ENCODE measurements at regions of chr1 and their contacts with region 1.

Region 1: GRCh38 chr1:200971955-200972711 is 51.4 kb downstream of the KIF21B start:
- H3K4me3 ChIP-seq: no peak overlapping the region
- H3K27ac ChIP-seq: no peak overlapping the region
- H3K4me1 ChIP-seq: no peaks in the 10 kb centered on the region
- CTCF ChIP-seq: 0 out of 2 replicates have a peak, but pooled peaks have one; percentile 17

Region 2: GRCh38 chr1:201016211-201016651 is 44.1 kb after region 1 on chr1:
- CTCF ChIA-PET with region 1: interaction called, 14 read pairs
- POLR2A ChIA-PET with region 1: no interaction called
- H3K4me3 ChIP-seq: no peak overlapping the region
- H3K27ac ChIP-seq: no peak overlapping the region
- H3K4me1 ChIP-seq: peaks cover 5% of the 10 kb centered on the region
- CTCF ChIP-seq: no peak

Region 3: GRCh38 chr1:201049248-201049831 is 77.2 kb after region 1 on chr1:
- CTCF ChIA-PET with region 1: interaction called, 108 read pairs
- POLR2A ChIA-PET with region 1: no interaction called
- H3K4me3 ChIP-seq: no peak overlapping the region
- H3K27ac ChIP-seq: no peak overlapping the region
- H3K4me1 ChIP-seq: no peaks in the 10 kb centered on the region
- CTCF ChIP-seq: no peak

Region 4: DNA sequence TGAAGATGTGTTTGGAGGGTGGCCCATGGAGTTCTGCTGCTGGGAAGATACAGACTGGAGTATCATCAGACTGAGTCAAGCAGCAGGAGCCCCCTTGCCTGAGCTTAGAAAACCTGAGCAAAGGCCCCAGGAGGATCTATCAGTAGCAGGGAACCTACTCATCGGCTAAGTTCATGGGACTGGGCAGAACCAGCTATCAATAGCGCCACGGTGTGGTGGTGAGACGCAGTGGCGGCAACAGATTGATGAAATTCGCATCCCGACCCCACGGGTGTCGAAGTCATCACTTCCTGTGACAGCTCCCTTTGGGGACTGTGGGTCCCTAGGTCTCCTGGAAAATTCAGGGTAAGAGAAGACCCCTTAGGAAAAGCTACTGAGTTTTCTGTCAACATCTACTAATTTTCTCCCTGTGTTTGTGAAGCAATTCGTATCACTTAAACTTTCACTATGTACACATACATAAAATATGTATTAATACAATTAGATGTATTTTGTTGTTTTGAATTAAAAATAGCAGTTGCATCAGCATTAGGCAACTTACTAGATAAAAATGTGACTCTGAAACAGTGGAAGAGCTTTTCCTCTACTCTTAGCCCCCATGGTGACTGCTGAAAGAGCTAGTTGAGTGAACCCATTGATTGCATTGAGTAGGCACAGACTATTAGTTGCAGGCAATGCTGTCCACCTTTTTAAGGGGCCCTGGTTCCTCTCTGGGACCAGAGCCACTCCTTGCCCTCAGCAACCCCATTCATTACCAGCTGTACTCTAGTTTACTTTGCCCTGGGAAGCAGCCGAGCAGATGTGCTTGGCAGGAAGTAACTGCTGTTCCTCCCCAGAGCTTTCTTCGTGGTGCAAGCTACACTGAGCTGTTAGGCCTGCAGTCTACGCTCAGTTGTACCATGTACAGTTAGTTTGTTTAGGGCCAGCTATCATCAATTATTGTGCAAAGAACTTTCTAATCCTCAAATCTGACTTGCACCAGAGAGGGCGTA is 147.4 kb after region 1 on chr1:
- CTCF ChIA-PET with region 1: interaction called, 48 read pairs
- POLR2A ChIA-PET with region 1: interaction called, 7 read pairs
- H3K4me3 ChIP-seq: no peak overlapping the region
- H3K27ac ChIP-seq: no peak overlapping the region
- H3K4me1 ChIP-seq: no peaks in the 10 kb centered on the region
- CTCF ChIP-seq: peak; percentile 76

Measured in HEK293 (cell line).